ENCODE measurements at regions of chr16 and their contacts with region 1.

Region 1: GRCh38 chr16:55543472-55543871 is 23.0 kb upstream of the CAPNS2 start:
- DNase-seq: peak; percentile 66
- H3K4me3 ChIP-seq: no peak overlapping the region
- H3K27ac ChIP-seq: no peak overlapping the region
- H3K4me1 ChIP-seq: peaks cover 31% of the 10 kb centered on the region
- H3K27me3 ChIP-seq: no peaks in the 10 kb centered on the region

Region 2: DNA sequence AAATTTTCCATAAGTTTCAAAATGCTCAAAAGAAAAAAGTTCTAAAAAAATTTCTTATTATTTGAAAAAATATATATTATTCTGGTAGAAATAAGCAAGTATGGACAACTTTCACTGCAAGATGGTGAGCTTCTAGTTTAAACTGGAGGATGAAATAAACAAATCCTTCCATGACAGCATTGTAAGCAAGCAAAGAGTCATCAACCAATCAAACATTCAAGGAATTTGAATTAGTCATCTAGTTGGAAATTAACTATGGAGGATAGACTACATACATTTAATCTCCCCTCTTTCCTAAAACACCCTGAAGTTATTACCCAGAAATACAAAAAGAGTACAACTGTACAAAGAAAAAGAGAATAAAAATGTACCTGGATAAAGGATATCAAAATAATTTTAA is 663.8 kb before region 1 on chr16:
- in situ Hi-C with region 1: no loop called
- DNase-seq: peak; percentile 17
- H3K4me3 ChIP-seq: no peak overlapping the region
- H3K27ac ChIP-seq: no peak overlapping the region
- H3K4me1 ChIP-seq: no peaks in the 10 kb centered on the region
- H3K27me3 ChIP-seq: no peaks in the 10 kb centered on the region

Region 3: GRCh38 chr16:55465077-55465896 is 78.2 kb before region 1 on chr16:
- in situ Hi-C with region 1: loop called (anchors 5 kb)
- DNase-seq: peak; percentile 86
- H3K4me3 ChIP-seq: peak overlapping the region; percentile 46; the same call in 1 of the 2 replicates
- H3K27ac ChIP-seq: no peak overlapping the region
- H3K4me1 ChIP-seq: peaks cover 10% of the 10 kb centered on the region
- H3K27me3 ChIP-seq: no peaks in the 10 kb centered on the region

Region 4: GRCh38 chr16:55701442-55702319 is 158.2 kb after region 1 on chr16:
- in situ Hi-C with region 1: loop called (anchors 5 kb)
- DNase-seq: peak; percentile 72
- H3K4me3 ChIP-seq: no peak overlapping the region
- H3K27ac ChIP-seq: no peak overlapping the region
- H3K4me1 ChIP-seq: no peaks in the 10 kb centered on the region
- H3K27me3 ChIP-seq: peaks cover 27% of the 10 kb centered on the region

Measured in GM23248 (cell line).